Uterus (tissue), 4 donors: ENCODE measurements at regions of chr6 and their contacts with region 1.

Region 1: DNA sequence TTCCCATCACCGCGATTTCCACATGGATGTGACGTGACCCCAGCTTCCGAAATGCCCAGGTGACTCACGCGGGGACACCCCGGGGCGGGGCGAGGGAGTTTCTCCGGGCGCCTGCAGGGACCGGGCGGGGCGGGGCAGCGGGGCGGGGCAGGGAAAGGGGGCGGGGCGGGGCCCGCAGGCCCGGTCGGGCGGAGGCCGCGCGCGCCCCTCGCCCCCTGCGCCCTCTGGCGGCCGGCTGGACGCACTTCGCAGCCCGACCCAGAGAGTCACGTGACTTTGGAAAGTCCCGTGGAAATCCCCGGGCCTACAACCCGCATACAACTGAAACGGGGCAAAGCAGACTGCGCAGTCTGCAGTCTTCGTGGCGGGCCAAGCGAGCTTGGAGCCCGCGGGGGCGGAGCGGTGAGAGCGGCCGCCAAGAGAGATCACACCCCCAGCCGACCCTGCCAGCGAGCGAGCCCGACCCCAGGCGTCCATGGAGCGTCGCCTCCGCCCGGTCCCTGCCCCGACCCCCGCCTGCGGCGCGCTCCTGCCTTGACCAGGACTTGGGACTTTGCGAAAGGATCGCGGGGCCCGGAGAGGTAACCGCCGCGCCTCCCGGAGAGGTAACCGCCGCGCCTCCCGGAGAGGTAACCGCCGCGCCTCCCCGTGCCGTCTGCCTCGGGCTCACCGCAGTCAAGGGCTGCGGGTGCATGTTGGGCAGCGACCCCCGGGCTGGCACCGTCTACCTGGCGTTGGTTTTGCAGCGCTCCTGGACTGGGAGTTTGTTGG is at the start of gene TNFAIP3:
- DNase-seq: peak; percentile 93 to 96
- H3K4me3 ChIP-seq: peak within 1 kb of the TSS; percentile 72 to 84
- H3K27ac ChIP-seq: peak within 1 kb of the TSS; percentile 89
- H3K4me1 ChIP-seq: no peaks in the 10 kb centered on the region
- H3K27me3 ChIP-seq: no peaks in the 10 kb centered on the region
- CTCF ChIP-seq: peak; percentile 53 to 95 (median 90)
- POLR2A ChIP-seq: peak; percentile 75 to 84
- total RNA-seq, gene TNFAIP3: 14.4 to 36.2 (median 19.6) TPM

Region 2: DNA sequence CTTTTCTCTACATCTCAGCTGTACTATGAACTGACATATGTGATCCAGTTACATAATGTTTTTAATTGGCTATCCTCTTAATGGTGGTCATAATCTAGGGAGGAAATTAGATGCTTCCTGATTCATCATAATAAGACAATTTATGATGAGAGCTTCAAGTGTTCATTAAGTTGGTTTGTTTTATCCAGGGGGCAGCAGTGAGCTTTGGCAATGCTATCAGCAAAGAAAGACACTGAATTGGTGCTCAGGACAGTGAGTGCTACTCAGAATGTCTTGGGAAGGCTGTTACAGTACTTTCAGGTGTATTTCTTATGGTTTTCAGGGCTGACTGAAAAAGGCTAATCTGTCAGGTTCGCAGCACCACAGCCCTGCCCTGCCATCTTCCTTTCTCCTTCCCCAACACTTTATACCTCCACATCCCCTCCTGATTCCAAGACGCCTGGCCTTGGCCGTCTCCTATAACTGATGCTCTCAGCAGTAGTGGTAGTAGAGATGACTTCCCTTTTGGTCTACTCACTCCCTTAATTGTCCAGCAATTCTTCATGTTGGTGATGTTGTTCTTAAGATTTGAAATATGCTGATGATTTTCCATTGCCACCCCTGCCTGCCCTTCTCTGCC is 67.0 kb before region 1 on chr6:
- intact Hi-C with region 1: loop called (anchors 10 kb)
- DNase-seq: peak in 1 of 2 donors; percentile 69
- H3K4me3 ChIP-seq: no peak overlapping the region
- H3K27ac ChIP-seq: no peak overlapping the region
- H3K4me1 ChIP-seq: peaks cover 0 to 9% of the 10 kb centered on the region in 2 donors
- H3K27me3 ChIP-seq: no peaks in the 10 kb centered on the region
- CTCF ChIP-seq: peak; percentile 28 to 58 (median 48)
- POLR2A ChIP-seq: no peak